ENCODE measurements at regions of chr20 and their contacts with region 1.

Region 1: GRCh38 chr20:63537525-63538203 is 488 bp upstream of the PTK6 start:
- DNase-seq: peak; percentile 93
- H3K4me3 ChIP-seq: peak overlapping the region in 1 of 3 experiments; percentile 28
- H3K27ac ChIP-seq: peak overlapping the region; percentile 19
- H3K4me1 ChIP-seq: peaks cover 56% of the 10 kb centered on the region
- H3K27me3 ChIP-seq: no peaks in the 10 kb centered on the region
- CTCF ChIP-seq: peak; percentile 82 to 98

Region 2: GRCh38 chr20:63457737-63458136 is 79.9 kb before region 1 on chr20:
- CTCF ChIA-PET with region 1: no interaction called
- dilution Hi-C with region 1: loop called (anchors 5 kb)
- in situ Hi-C with region 1: no loop called
- intact Hi-C with region 1: no loop called
- DNase-seq: peak; percentile 75
- H3K4me3 ChIP-seq: no peak overlapping the region
- H3K27ac ChIP-seq: no peak overlapping the region
- H3K4me1 ChIP-seq: peaks cover 31% of the 10 kb centered on the region
- H3K27me3 ChIP-seq: peaks cover 2% of the 10 kb centered on the region
- CTCF ChIP-seq: no peak

Region 3: GRCh38 chr20:63594043-63594561 is 56.4 kb after region 1 on chr20:
- CTCF ChIA-PET with region 1: no interaction called
- dilution Hi-C with region 1: loop called (anchors 10 kb)
- in situ Hi-C with region 1: no loop called
- intact Hi-C with region 1: no loop called
- DNase-seq: no peak
- H3K4me3 ChIP-seq: no peak overlapping the region
- H3K27ac ChIP-seq: no peak overlapping the region
- H3K4me1 ChIP-seq: peaks cover 9% of the 10 kb centered on the region
- H3K27me3 ChIP-seq: no peaks in the 10 kb centered on the region
- CTCF ChIP-seq: no peak

Region 4: DNA sequence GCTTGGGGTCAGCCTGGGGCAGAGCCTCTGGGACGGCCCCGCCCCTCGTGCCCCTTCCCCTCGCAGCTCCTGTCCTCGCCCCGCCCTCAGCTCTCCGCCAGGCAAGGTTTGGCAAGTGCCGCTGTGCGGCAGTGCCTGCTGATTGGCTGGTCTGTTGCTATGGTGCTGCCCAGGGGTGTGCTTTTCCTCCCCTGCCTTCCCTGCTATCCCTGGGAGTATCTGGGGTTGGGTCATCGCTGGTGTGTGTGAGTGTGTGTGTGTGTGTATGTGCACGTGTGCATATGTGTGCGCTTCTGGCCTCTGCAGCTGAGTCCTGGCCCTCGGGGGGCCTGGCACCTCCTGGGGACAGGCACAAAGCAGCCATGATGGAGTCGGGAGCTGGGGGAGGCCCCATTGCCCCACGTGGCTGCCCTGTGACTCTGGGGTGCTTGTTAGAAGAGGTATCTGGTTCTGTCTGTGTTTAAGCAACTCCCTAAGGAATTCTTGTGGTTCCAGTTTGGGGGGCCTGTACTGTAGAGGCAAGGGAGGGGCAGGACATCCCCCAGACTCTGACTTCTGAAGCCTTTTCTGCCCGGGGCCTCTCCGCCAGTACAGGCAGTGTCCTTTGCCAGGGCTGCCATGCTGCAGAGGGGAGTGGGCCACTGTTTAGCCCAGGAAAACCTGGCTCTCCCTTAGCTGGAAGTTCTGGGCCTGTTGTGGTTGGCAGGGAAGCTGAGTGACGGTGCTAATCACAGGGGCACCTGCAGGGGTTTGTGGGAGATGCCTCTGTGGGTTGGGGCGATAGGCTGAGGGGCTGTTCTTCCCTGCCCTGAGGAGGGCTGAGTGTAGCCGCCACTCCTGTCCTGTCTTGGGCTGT is 127.4 kb after region 1 on chr20:
- CTCF ChIA-PET with region 1: no interaction called
- dilution Hi-C with region 1: loop called (anchors 5 kb)
- in situ Hi-C with region 1: no loop called
- intact Hi-C with region 1: no loop called
- DNase-seq: no peak
- H3K4me3 ChIP-seq: no peak overlapping the region
- H3K27ac ChIP-seq: no peak overlapping the region
- H3K4me1 ChIP-seq: no peaks in the 10 kb centered on the region
- H3K27me3 ChIP-seq: no peaks in the 10 kb centered on the region
- CTCF ChIP-seq: no peak

Region 5: GRCh38 chr20:63791497-63792156 is 254.0 kb after region 1 on chr20:
- CTCF ChIA-PET with region 1: no interaction called
- dilution Hi-C with region 1: no loop called
- in situ Hi-C with region 1: no loop called
- intact Hi-C with region 1: loop called (anchors 1 kb)
- DNase-seq: no peak
- H3K4me3 ChIP-seq: no peak overlapping the region
- H3K27ac ChIP-seq: no peak overlapping the region
- H3K4me1 ChIP-seq: no peaks in the 10 kb centered on the region
- H3K27me3 ChIP-seq: no peaks in the 10 kb centered on the region
- CTCF ChIP-seq: no peak

Region 6: GRCh38 chr20:63955827-63956663 is 418.4 kb after region 1 on chr20 and contains the start of gene UCKL1:
- CTCF ChIA-PET with region 1: no interaction called
- dilution Hi-C with region 1: no loop called
- in situ Hi-C with region 1: no loop called
- intact Hi-C with region 1: loop called (anchors 5 kb)
- DNase-seq: peak; percentile 78
- H3K4me3 ChIP-seq: peak within 1 kb of the TSS; percentile 80 to 92 (median 88)
- H3K27ac ChIP-seq: peak within 1 kb of the TSS; percentile 55
- H3K4me1 ChIP-seq: peaks cover 39% of the 10 kb centered on the region
- H3K27me3 ChIP-seq: no peaks in the 10 kb centered on the region
- CTCF ChIP-seq: no peak
- total RNA-seq, gene UCKL1: 28.5 to 34.3 TPM

Region 7: GRCh38 chr20:64053841-64054661 is 516.4 kb after region 1 on chr20:
- CTCF ChIA-PET with region 1: no interaction called
- dilution Hi-C with region 1: loop called (anchors 5 kb)
- in situ Hi-C with region 1: no loop called
- intact Hi-C with region 1: no loop called
- DNase-seq: no peak
- H3K4me3 ChIP-seq: no peak overlapping the region
- H3K27ac ChIP-seq: no peak overlapping the region
- H3K4me1 ChIP-seq: peaks cover 14% of the 10 kb centered on the region
- H3K27me3 ChIP-seq: no peaks in the 10 kb centered on the region
- CTCF ChIP-seq: peak in 1 of 2 donors; percentile 17

Measured in mammary epithelial cell (primary cell).